ENCODE measurements at regions of chr11 and their contacts with region 1.

Region 1: GRCh38 chr11:126525216-126525615 is 169.7 kb downstream of the ST3GAL4 start:
- DNase-seq: no peak
- H3K4me3 ChIP-seq: no peak overlapping the region
- H3K27ac ChIP-seq: no peak overlapping the region
- H3K4me1 ChIP-seq: no peaks in the 10 kb centered on the region
- H3K27me3 ChIP-seq: no peaks in the 10 kb centered on the region
- CTCF ChIP-seq: no peak
- POLR2A ChIP-seq: no peak

Region 2: GRCh38 chr11:124707829-124708228 is 1817.4 kb before region 1 on chr11:
- intact Hi-C with region 1: no loop called
- DNase-seq: no peak
- H3K4me3 ChIP-seq: no peak overlapping the region
- H3K27ac ChIP-seq: no peak overlapping the region
- H3K4me1 ChIP-seq: no peaks in the 10 kb centered on the region
- H3K27me3 ChIP-seq: no peaks in the 10 kb centered on the region
- CTCF ChIP-seq: no peak
- POLR2A ChIP-seq: no peak

Region 3: GRCh38 chr11:125505492-125506080 is 1019.6 kb before region 1 on chr11:
- intact Hi-C with region 1: no loop called
- DNase-seq: no peak
- H3K4me3 ChIP-seq: no peak overlapping the region
- H3K27ac ChIP-seq: no peak overlapping the region
- H3K4me1 ChIP-seq: no peaks in the 10 kb centered on the region
- H3K27me3 ChIP-seq: no peaks in the 10 kb centered on the region
- CTCF ChIP-seq: no peak
- POLR2A ChIP-seq: no peak

Region 4: GRCh38 chr11:126751242-126751641 is 226.0 kb after region 1 on chr11:
- intact Hi-C with region 1: loop called (anchors 5 kb)
- DNase-seq: no peak
- H3K4me3 ChIP-seq: no peak overlapping the region
- H3K27ac ChIP-seq: no peak overlapping the region
- H3K4me1 ChIP-seq: no peaks in the 10 kb centered on the region
- H3K27me3 ChIP-seq: no peaks in the 10 kb centered on the region
- CTCF ChIP-seq: no peak
- POLR2A ChIP-seq: no peak